GM13976 (cell line): ENCODE measurements at regions of chr9 and their contacts with region 1.

Region 1: DNA sequence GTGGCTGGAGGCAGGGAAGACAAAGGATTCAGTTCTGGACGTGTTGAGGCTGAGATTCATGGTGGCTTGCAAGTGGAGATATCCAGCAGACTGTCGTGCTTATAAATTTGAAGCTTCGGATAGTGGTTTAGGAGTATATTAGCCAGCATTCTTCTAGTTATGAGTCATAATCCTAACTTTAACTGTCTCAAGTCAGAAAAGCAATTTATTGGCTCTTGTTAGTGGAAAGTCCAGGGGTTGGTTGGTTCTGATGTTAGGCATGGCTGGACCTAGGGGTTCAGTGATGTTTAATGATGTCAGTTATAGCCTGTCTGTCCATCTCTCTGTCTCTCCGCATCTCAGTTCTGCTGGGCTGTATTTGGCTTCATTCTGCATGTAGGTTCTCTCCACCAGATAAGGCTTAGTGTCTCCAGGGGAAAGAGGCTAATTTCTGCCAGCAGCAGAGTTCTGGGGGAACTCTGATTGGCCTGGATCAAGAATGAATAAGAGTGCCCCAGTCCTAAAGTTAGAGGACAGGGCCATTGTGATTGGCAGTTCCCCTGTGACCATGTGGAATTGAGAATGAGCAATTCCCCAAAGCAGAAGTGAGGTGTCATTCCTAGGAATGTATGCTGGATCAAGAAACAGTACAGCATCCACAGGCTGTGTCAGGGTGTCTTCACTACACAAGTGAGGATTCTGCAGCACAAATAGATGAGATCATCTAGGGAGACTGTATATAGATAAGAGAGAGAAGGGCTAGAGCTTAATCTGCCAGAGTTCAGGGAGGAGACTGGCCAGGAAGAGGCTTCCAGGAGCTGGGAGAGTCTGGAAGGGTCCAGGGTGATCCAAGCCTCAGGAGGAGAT is 72.9 kb upstream of the SHB start:
- DNase-seq: no peak
- CTCF ChIP-seq: no peak

Region 2: DNA sequence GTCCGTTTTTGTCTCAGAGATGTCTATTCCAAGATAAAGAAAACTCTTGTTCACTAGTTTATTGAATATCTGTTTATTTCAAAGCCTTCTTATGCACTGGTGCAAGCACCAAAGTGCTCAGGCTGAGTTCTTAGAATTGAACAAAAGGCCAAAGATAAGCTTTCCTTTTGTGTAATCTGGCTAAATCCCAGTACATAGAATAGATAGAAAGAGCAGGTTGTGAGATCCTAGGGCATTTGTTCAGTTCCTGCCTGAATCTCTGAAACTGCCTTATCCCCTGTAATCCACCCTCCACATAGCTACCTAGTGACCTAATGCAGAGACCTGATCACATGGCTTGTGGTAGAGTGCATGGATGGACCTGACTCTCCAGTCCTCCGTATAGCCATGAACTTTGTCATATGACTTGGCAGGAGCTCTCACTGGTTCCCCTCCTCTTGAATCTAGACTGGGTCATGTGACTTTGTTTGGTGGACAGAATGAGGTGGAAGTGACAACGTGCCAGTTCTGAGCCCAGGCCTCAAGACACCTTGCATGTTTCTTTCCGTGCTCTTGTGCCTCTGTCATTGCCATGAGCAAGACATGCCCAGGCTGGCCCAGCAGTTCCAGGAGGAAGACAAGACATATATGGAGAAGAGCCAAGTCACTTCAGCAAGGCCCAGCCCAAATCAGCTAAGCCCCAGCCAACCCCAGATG is 66.4 kb after region 1 on chr9:
- in situ Hi-C with region 1: loop called (anchors 10 kb)
- DNase-seq: no peak
- CTCF ChIP-seq: no peak